ENCODE measurements at regions of chr14 and their contacts with region 1.

Region 1: DNA sequence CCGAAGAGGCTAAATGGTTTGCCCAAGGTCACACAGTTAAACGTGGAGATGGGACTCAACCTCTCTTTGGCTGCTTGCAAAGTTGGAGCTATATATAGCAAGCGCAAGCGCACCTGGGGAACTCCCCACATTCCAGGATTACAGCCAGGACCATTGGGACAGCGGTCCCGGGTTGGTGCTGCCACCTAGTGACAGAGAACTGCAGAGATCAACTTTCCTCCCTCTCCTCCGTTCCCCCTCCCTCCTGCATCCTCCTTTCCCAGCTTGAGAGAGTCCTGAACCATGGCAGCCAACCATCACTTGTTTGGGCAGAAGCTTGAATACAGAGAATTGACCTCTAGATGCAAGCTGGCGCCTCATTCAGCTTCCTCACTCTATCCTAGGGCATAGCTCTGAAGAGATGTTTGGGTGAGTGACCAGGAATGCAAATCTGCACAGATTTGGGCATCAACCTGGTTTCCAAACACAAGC is 17.4 kb upstream of the FLVCR2 start:
- DNase-seq: peak in 4 of 5 donors; percentile 21 to 40 (median 37)
- H3K4me3 ChIP-seq: no peak overlapping the region
- H3K4me3 Mint-ChIP-seq: peak overlapping the region in 4 of 8 donors; percentile 21 to 62 (median 50)
- H3K27ac ChIP-seq: no peak overlapping the region
- H3K27ac Mint-ChIP-seq: peak overlapping the region in 4 of 7 donors; percentile 13 to 67 (median 48)
- H3K4me1 ChIP-seq: peaks cover 26% of the 10 kb centered on the region
- H3K4me1 Mint-ChIP-seq: peaks cover 21 to 46% (median 28%) of the 10 kb centered on the region in 4 donors
- H3K27me3 ChIP-seq: no peaks in the 10 kb centered on the region
- H3K27me3 Mint-ChIP-seq: peaks cover 0 to 1% of the 10 kb centered on the region in 2 donors

Region 2: DNA sequence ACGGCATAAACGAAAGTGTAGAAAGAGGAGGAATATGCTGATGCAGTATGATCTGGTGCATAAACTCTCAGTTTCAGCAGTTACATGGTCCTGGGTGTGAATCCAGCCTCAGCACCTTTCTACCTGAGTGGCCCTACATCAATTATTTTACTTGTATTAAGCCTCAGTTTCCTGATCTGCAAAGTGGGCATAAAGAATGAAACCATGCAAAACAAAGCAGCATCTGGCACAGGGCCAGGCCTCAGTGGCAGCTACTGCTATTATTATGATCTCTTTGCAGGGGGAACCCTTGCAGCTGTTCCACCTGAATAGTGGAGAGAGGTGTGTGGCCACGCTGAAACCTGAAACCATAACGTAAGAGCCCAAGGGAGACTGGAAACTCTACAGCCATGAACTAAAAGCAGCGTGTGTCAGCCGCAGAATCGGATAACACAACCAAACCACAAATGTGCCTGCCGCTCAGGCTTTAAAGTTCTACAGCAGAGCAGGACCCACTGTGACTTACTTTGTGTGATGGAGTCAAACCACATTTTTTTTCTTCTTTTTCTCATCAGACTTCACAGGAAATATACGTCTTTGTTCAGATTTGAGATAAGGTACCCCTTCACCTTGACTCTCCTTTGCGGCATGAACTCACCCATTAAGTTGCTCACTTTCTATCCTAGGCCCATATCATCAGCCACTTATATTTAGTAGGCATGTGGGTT is 311.6 kb before region 1 on chr14:
- CTCF ChIA-PET with region 1: no interaction called
- POLR2A ChIA-PET with region 1: no interaction called
- intact Hi-C with region 1: loop called (anchors 10 kb)
- DNase-seq: peak; percentile 90 to 96 (median 95)
- H3K4me3 ChIP-seq: peak overlapping the region in 1 of 2 donors; percentile 54
- H3K4me3 Mint-ChIP-seq: peak overlapping the region; percentile 63 to 85 (median 78)
- H3K27ac ChIP-seq: peak overlapping the region; percentile 80
- H3K27ac Mint-ChIP-seq: peak overlapping the region; percentile 92 to 99 (median 97)
- H3K4me1 ChIP-seq: peaks cover 58% of the 10 kb centered on the region
- H3K4me1 Mint-ChIP-seq: peaks cover 38 to 70% (median 56%) of the 10 kb centered on the region in 4 donors
- H3K27me3 ChIP-seq: no peaks in the 10 kb centered on the region
- H3K27me3 Mint-ChIP-seq: no peaks in the 10 kb centered on the region

Region 3: GRCh38 chr14:75307700-75308379 is 253.2 kb before region 1 on chr14:
- CTCF ChIA-PET with region 1: interaction called, 48 read pairs
- POLR2A ChIA-PET with region 1: no interaction called
- intact Hi-C with region 1: loop called (anchors 1 kb)
- DNase-seq: peak; percentile 56 to 68 (median 63)
- H3K4me3 ChIP-seq: no peak overlapping the region
- H3K4me3 Mint-ChIP-seq: peak overlapping the region in 1 of 8 donors; percentile 26
- H3K27ac ChIP-seq: no peak overlapping the region
- H3K27ac Mint-ChIP-seq: no peak overlapping the region
- H3K4me1 ChIP-seq: peaks cover 6% of the 10 kb centered on the region
- H3K4me1 Mint-ChIP-seq: peaks cover 4 to 19% (median 8%) of the 10 kb centered on the region in 4 donors
- H3K27me3 ChIP-seq: no peaks in the 10 kb centered on the region
- H3K27me3 Mint-ChIP-seq: peaks cover 1 to 3% of the 10 kb centered on the region in 2 donors

Region 4: GRCh38 chr14:75497191-75497590 is 63.8 kb before region 1 on chr14:
- CTCF ChIA-PET with region 1: interaction called, 101 read pairs
- POLR2A ChIA-PET with region 1: no interaction called
- intact Hi-C with region 1: no loop called
- DNase-seq: no peak
- H3K4me3 ChIP-seq: no peak overlapping the region
- H3K4me3 Mint-ChIP-seq: no peak overlapping the region
- H3K27ac ChIP-seq: no peak overlapping the region
- H3K27ac Mint-ChIP-seq: peak overlapping the region in 3 of 7 donors; percentile 58 to 75 (median 59)
- H3K4me1 ChIP-seq: no peaks in the 10 kb centered on the region
- H3K4me1 Mint-ChIP-seq: peaks cover 4 to 16% (median 8%) of the 10 kb centered on the region in 4 donors
- H3K27me3 ChIP-seq: no peaks in the 10 kb centered on the region
- H3K27me3 Mint-ChIP-seq: no peaks in the 10 kb centered on the region

Region 5: DNA sequence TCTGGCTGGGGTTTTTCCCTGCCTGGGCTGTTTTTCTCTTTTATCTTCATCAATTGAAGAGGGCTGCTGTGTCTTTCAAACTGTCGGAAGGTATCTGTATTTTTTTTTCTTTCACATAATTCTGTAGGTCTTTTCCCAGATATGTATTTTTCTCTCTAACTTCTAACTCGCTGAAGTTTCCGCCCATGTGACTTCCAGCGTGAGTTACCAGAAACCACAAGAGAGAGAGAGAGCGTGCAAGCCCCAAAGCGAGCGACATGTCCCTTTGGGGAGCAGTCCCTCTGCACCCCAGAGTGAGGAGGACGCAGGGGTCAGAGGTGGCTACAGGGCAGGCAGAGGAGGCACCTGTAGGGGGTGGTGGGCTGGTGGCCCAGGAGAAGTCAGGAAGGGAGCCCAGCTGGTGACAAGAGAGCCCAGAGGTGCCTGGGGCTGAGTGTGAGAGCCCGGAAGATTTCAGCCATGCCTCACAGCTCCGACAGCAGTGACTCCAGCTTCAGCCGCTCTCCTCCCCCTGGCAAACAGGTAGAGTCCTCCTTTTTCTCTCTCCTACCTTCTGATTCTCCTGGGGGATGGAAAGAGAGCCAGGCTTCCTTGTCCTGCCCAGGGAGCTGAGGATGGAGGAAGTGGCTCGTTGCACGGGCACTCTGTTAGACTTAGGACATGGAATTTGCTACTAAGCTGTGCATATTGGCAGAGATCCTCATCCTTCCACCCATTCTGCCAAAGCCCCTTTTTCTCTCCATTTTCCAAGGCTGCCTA is 38.6 kb before region 1 on chr14 and contains the start of gene BATF:
- CTCF ChIA-PET with region 1: interaction called, 105 read pairs
- POLR2A ChIA-PET with region 1: interaction called, 18 read pairs
- intact Hi-C with region 1: loop called (anchors 1 kb)
- DNase-seq: peak; percentile 79 to 90 (median 82)
- H3K4me3 ChIP-seq: peak within 1 kb of the TSS; percentile 81 to 90
- H3K4me3 Mint-ChIP-seq: peak within 1 kb of the TSS; percentile 96 to 100 (median 99)
- H3K27ac ChIP-seq: peak within 1 kb of the TSS; percentile 88
- H3K27ac Mint-ChIP-seq: peak within 1 kb of the TSS; percentile 94 to 99 (median 98)
- H3K4me1 ChIP-seq: peaks cover 69% of the 10 kb centered on the region
- H3K4me1 Mint-ChIP-seq: peaks cover 47 to 84% (median 65%) of the 10 kb centered on the region in 4 donors
- H3K27me3 ChIP-seq: no peaks in the 10 kb centered on the region
- H3K27me3 Mint-ChIP-seq: no peaks in the 10 kb centered on the region
- total RNA-seq, gene BATF: 17.1 to 20.6 TPM

Region 6: DNA sequence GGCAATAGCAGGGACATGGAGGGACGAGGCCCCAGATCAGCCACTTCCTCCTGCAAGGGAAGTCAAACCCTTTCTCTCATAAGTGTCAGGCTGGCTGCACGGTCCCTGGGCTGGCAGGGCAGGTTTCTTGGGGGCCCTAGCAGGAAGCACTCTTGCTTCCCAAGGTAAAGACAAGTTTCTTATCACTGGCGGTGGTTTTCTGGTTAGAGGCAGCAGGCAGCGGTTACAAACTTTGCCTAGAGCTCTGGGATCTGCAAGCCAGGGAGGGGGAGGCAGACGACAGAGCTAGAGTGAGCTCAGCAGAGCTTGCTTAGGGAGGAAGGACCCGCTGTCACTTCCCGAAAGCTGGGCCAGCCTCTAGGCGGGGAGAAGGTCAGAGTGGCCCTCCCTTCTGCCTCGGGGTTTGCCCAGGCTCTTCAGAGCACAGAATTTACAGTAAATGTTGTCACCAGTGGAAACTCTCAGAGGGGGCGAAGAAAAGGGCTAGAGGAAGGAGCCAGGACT is 18.4 kb before region 1 on chr14:
- CTCF ChIA-PET with region 1: interaction called, 118 read pairs
- POLR2A ChIA-PET with region 1: interaction called, 4 read pairs
- intact Hi-C with region 1: no loop called
- DNase-seq: peak; percentile 67 to 93 (median 71)
- H3K4me3 ChIP-seq: peak overlapping the region; percentile 34 to 42
- H3K4me3 Mint-ChIP-seq: peak overlapping the region; percentile 66 to 89 (median 82)
- H3K27ac ChIP-seq: peak overlapping the region; percentile 94
- H3K27ac Mint-ChIP-seq: peak overlapping the region; percentile 96 to 99 (median 97)
- H3K4me1 ChIP-seq: peaks cover 71% of the 10 kb centered on the region
- H3K4me1 Mint-ChIP-seq: peaks cover 48 to 79% (median 67%) of the 10 kb centered on the region in 4 donors
- H3K27me3 ChIP-seq: no peaks in the 10 kb centered on the region
- H3K27me3 Mint-ChIP-seq: no peaks in the 10 kb centered on the region